PC-9 (cell line): ENCODE measurements at regions of chr13 and their contacts with region 1.

Region 1: GRCh38 chr13:110412132-110412914 is 105.2 kb downstream of the COL4A2 start:
- DNase-seq: peak; percentile 88 to 97
- H3K4me3 ChIP-seq: no peak overlapping the region
- H3K27ac ChIP-seq: peak overlapping the region; percentile 71
- H3K4me1 ChIP-seq: peaks cover 19% of the 10 kb centered on the region
- H3K27me3 ChIP-seq: no peaks in the 10 kb centered on the region
- CTCF ChIP-seq: peak; percentile 94

Region 2: GRCh38 chr13:110138010-110138699 is 274.2 kb before region 1 on chr13:
- CTCF ChIA-PET with region 1: no interaction called
- POLR2A ChIA-PET with region 1: no interaction called
- intact Hi-C with region 1: loop called (anchors 10 kb)
- DNase-seq: peak; percentile 82 to 94
- H3K4me3 ChIP-seq: peak overlapping the region; percentile 67
- H3K27ac ChIP-seq: peak overlapping the region; percentile 95
- H3K4me1 ChIP-seq: peaks cover 42% of the 10 kb centered on the region
- H3K27me3 ChIP-seq: no peaks in the 10 kb centered on the region
- CTCF ChIP-seq: peak; percentile 42; the same call in 1 of the 2 replicates

Region 3: DNA sequence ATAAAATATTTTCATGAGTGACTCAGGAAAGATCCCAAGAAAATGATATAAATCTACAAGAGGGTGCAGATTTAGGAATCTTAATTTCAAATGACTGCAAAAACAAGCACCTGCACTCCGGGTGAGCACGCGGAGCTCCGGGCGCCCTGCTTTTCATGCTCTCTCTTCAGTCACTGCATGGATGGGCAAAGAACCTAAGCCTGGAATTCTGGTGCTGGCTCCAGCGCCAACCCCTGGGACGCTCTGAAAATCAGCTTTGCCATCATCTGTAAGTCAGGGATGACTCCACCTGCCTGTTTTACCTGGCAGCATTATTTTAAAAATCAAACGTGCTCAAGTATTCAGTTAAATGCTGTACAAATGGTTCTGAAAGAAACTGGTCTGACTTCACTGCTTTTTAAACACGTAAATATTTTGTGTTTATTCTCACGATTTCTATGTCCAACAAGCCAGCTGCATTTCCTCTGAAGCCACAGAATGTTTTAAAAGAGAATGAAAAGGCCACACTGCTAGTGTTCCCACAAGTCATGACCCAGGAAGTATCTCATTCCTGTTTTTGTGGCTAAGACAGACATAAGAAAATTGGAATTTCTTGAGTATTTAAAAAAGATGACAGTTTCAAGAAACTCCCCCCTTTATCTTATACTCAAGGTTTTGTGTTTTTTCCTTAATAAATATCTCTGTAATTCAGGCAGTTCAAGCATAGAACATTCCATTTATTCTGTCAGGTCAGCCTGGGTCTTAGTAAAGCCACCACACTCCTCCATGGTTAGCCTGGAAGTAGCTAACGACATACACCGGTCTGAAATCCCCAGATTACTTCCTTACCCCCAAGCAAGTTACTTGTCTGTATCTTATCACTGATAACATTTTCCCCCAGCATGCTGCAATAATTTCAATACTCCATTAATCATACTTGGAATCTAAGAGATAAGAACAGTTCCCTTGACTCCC is 186.4 kb before region 1 on chr13:
- CTCF ChIA-PET with region 1: no interaction called
- POLR2A ChIA-PET with region 1: no interaction called
- intact Hi-C with region 1: loop called (anchors 1 kb)
- DNase-seq: peak in 1 of 2 experiments; percentile 94
- H3K4me3 ChIP-seq: no peak overlapping the region
- H3K27ac ChIP-seq: peak overlapping the region; percentile 60
- H3K4me1 ChIP-seq: peaks cover 29% of the 10 kb centered on the region
- H3K27me3 ChIP-seq: no peaks in the 10 kb centered on the region
- CTCF ChIP-seq: no peak

Region 4: DNA sequence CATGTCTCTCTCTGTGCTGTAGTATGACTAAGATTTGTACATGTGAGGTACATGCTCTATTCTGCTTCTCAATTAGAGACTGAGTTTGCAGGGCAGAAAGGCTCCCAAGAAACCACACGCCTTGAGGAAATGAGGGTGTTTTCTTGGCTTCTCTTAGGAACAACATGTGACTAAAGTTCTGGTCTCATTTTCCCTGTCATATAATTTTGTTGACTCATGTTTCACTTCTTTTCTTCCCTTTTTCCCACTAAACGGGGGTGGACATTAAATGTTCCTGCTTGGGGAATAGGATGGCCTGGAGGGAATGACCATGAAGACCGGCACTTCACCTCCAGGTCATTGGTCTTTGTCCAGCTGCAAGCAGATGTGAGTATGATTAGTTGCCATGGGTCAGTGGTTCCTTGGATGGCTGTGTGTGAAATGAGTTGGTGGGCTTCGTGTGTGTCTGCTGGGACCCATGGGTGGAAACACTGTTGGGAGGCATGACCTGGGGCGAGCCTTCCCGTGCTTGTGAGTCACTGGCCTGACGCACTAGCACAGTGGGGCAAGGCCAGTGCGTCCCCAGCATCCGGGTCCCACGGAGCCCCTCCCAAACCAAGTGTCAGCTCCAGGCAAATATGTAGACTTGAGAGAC is 161.9 kb before region 1 on chr13:
- CTCF ChIA-PET with region 1: interaction called, 3 read pairs
- POLR2A ChIA-PET with region 1: no interaction called
- intact Hi-C with region 1: loop called (anchors 1 kb)
- DNase-seq: no peak
- H3K4me3 ChIP-seq: no peak overlapping the region
- H3K27ac ChIP-seq: no peak overlapping the region
- H3K4me1 ChIP-seq: peaks cover 5% of the 10 kb centered on the region; the same call in 1 of the 2 replicates
- H3K27me3 ChIP-seq: no peaks in the 10 kb centered on the region
- CTCF ChIP-seq: no peak

Region 5: GRCh38 chr13:110319774-110320509 is 92.4 kb before region 1 on chr13:
- CTCF ChIA-PET with region 1: interaction called, 3 read pairs
- POLR2A ChIA-PET with region 1: no interaction called
- intact Hi-C with region 1: loop called (anchors 1 kb)
- DNase-seq: peak; percentile 89 to 99
- H3K4me3 ChIP-seq: peak overlapping the region; percentile 44; the same call in 1 of the 2 replicates
- H3K27ac ChIP-seq: peak overlapping the region; percentile 95
- H3K4me1 ChIP-seq: peaks cover 46% of the 10 kb centered on the region
- H3K27me3 ChIP-seq: no peaks in the 10 kb centered on the region
- CTCF ChIP-seq: no peak

Region 6: DNA sequence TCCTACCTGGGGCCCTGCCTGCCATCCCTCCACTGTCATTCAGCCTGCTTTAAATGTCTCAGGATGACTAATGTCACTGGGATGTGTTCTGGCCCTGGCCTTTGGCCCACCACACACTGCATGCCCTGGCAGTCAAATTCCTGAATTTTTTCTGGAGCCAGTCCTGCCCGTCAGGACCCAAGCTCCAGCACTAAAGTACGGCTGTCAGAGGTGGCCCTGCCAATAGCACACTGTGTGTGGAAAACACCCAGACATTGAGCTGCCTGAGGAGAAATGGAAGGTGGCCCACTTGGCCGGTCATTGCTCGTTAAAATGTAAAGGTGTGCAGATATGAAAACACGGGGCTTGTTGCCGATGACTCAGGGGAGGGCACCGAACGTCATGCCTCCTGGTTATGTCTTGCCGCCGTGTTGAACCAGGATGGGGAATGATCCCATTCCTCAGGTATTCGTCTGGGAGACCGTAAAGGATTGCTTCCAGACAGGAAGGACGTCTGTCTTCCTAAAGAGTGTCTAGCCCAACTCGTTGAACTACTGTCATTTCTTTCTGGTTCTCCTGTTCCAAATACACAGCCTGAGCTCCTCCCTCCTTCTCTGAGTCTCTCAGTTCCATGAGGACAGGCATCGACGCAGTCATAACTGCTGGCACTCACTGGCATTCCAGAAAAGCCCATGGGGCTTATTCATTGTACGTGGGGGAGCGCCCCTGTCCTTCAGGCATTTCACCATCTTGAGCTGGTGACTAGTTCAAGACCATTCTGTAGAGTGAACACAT is 64.6 kb before region 1 on chr13:
- CTCF ChIA-PET with region 1: no interaction called
- POLR2A ChIA-PET with region 1: no interaction called
- intact Hi-C with region 1: loop called (anchors 1 kb)
- DNase-seq: peak; percentile 84 to 98
- H3K4me3 ChIP-seq: peak overlapping the region; percentile 9; the same call in 1 of the 2 replicates
- H3K27ac ChIP-seq: peak overlapping the region; percentile 83
- H3K4me1 ChIP-seq: peaks cover 63% of the 10 kb centered on the region
- H3K27me3 ChIP-seq: no peaks in the 10 kb centered on the region
- CTCF ChIP-seq: no peak

Region 7: DNA sequence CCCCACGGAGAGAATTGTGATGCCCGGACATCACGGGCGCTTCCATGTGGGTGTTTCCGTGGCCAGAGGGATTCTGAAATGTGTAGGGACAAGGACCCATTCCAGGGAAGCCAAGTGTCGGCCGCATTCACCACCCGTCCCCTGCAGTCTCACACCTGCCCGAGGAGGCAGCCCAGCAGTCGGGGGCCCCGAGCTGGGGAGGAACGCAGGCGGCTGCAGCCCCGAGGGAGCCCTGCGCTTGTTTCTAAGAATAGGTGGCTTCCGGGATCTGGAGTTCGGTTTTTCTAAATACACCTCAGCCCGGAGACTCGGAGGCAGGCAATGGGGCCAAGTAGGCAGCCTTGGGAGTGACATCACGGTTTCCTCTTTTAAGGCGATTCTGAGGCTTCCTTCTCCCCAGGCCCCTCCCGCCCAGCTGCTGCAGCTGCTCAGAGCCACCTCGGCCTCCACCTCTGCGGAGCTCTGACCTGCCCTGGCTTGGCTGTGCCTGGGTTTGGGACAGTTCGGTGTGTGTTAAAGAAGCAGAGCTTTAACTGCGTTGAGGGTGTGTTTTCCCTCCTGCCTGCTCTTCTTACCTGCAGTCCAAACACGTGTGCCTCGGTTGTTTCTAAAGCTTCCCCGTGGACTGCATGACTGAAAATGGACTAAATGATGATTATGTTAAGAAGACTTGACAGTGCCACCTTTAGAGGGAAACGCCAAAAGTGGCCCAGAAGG is 24.8 kb before region 1 on chr13:
- CTCF ChIA-PET with region 1: interaction called, 4 read pairs
- POLR2A ChIA-PET with region 1: interaction called, 6 read pairs
- intact Hi-C with region 1: loop called (anchors 1 kb)
- DNase-seq: no peak
- H3K4me3 ChIP-seq: no peak overlapping the region
- H3K27ac ChIP-seq: peak overlapping the region; percentile 64; the same call in 1 of the 2 replicates
- H3K4me1 ChIP-seq: peaks cover 48% of the 10 kb centered on the region
- H3K27me3 ChIP-seq: no peaks in the 10 kb centered on the region
- CTCF ChIP-seq: no peak

Region 8: GRCh38 chr13:110561344-110562035 is 149.2 kb after region 1 on chr13 and contains the start of gene RAB20:
- CTCF ChIA-PET with region 1: no interaction called
- POLR2A ChIA-PET with region 1: no interaction called
- intact Hi-C with region 1: no loop called
- DNase-seq: peak; percentile 73 to 78
- H3K4me3 ChIP-seq: peak within 1 kb of the TSS; percentile 91
- H3K27ac ChIP-seq: peak within 1 kb of the TSS; percentile 72
- H3K4me1 ChIP-seq: peaks cover 58% of the 10 kb centered on the region
- H3K27me3 ChIP-seq: no peaks in the 10 kb centered on the region
- CTCF ChIP-seq: no peak
- total RNA-seq, gene RAB20: 31.9 and 41.0 TPM in 2 replicates